ENCODE measurements at regions of chr18 and their contacts with region 1.

Region 1: DNA sequence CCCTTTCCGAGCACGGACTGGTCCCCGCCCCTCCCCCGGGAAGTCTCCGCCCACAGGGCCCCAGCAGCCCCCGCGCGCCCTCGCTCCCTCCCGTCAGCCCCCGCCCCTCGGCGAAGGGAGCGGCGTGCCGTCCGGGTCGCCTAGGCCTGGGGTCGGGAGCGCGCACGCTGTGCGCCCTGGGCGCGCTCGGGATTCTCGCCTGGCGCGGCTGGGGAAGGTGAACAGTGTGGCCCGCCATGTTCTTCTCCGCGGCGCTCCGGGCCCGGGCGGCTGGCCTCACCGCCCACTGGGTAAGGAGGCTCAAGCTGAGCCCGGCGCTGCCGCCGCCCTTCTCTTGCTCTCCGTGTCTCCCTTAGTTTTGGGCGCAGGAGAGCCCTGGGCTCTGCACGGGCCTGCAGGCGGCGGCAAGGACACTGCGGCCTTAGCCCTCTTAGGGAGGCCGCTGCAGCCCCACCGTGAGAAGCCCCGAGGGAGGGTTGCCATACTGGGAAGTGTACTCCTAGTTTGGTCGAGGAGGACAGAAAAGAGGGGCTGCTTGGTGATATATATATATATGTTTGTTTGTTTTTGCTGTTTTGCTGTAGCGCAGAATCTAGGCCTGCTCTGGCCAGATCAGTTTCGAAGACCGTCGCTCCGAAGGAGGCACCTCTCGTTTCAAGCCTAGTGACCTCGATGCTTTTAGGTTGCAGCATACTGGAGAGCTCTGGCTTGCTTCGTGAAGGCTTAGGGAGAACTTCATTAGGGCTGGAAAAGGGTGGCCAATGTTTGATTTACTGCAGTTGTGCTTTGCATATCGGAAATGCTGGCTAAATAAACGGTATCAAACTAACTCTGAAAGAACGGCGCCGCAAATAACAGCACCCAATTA is at the start of gene NDUFV2:
- DNase-seq: peak; percentile 82 to 98
- H3K4me3 ChIP-seq: peak within 1 kb of the TSS; percentile 77 to 92 (median 86)
- H3K27ac ChIP-seq: peak within 1 kb of the TSS; percentile 91
- H3K4me1 ChIP-seq: peaks cover 0 to 19% (median 8%) of the 10 kb centered on the region in 4 experiments; a peak in 3 of 7 replicates
- H3K27me3 ChIP-seq: peaks cover 0 to 2% (median 0%) of the 10 kb centered on the region in 4 experiments; a peak in 1 of 7 replicates
- CTCF ChIP-seq: no peak
- EP300 ChIP-seq: no peak
- POLR2A ChIP-seq: peak in 1 of 2 experiments; percentile 91; a peak in 2 of 3 replicates
- RAD21 ChIP-seq: no peak
- total RNA-seq, gene NDUFV2: 191 and 196 TPM in 2 replicates

Region 2: DNA sequence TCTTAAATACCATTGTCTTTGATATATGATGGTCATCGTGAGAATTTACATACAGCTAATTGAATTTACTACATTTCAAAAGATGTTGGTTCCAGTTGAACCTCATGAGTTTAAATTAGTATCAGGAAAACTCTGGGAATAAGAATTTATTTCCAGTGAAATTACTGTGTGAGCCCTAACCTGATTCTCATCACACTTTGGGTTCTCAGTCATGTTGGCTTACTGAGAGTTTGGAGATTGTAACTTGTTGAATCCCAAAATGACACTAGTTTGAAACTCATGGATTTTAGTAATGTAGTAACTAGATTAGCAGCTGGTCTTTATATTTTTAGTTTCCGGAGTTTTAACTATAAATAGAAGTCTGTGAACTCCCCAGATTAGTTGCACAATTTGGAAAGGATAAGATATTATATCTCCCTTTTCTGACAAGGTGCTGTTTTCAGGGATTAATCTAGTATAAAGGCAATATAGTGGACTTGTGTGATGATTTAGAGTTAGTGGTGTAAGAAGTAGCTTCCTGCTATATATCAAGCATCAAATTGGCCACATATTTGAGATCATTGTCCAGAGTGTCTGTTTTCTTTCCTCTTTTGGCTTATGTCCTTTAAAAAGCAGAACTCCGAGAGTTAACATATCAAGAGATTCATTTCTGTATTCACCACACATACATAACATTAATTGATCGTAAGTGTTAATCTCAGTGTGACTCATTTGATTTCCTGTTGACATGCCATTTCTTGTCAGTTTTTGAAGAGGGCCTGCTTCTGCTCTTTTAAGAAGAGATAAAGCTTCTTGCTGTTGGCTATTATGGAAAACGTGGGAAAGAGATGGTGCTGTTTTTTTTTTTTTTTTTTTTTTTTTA is 15.5 kb after region 1 on chr18:
- CTCF ChIA-PET with region 1: interaction called, 3 read pairs
- POLR2A ChIA-PET with region 1: interaction called, 61 read pairs
- DNase-seq: no peak
- H3K4me3 ChIP-seq: no peak overlapping the region
- H3K27ac ChIP-seq: no peak overlapping the region
- H3K4me1 ChIP-seq: no peaks in the 10 kb centered on the region; a peak in 1 of 7 replicates
- H3K27me3 ChIP-seq: no peaks in the 10 kb centered on the region
- CTCF ChIP-seq: no peak
- EP300 ChIP-seq: no peak
- POLR2A ChIP-seq: no peak
- RAD21 ChIP-seq: no peak

Region 3: DNA sequence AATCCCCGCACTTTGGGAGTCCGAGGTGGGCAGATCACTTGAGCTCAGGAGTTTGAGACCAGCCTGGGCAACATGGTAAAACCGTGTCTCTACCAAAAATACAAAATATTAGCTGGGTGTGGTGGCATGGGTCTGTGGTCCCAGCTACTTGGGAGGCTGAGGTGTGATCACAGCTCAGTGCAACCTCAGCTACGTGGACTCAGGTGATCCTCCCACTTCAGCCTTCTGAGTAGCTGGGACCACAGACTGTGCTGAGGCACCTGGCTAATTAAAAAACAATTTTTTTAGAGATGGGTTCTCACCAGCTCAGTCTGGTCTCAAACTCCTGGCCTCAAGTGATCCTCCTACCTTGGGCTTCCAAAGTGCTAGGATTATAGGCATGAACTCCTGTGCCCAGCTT is 57.3 kb after region 1 on chr18:
- CTCF ChIA-PET with region 1: no interaction called
- POLR2A ChIA-PET with region 1: no interaction called
- DNase-seq: no peak
- H3K4me3 ChIP-seq: no peak overlapping the region
- H3K27ac ChIP-seq: no peak overlapping the region
- H3K4me1 ChIP-seq: no peaks in the 10 kb centered on the region
- H3K27me3 ChIP-seq: no peaks in the 10 kb centered on the region
- CTCF ChIP-seq: no peak
- EP300 ChIP-seq: no peak
- POLR2A ChIP-seq: no peak
- RAD21 ChIP-seq: no peak